HepG2 (cell line): ENCODE measurements at regions of chr15 and their contacts with region 1.

Region 1: DNA sequence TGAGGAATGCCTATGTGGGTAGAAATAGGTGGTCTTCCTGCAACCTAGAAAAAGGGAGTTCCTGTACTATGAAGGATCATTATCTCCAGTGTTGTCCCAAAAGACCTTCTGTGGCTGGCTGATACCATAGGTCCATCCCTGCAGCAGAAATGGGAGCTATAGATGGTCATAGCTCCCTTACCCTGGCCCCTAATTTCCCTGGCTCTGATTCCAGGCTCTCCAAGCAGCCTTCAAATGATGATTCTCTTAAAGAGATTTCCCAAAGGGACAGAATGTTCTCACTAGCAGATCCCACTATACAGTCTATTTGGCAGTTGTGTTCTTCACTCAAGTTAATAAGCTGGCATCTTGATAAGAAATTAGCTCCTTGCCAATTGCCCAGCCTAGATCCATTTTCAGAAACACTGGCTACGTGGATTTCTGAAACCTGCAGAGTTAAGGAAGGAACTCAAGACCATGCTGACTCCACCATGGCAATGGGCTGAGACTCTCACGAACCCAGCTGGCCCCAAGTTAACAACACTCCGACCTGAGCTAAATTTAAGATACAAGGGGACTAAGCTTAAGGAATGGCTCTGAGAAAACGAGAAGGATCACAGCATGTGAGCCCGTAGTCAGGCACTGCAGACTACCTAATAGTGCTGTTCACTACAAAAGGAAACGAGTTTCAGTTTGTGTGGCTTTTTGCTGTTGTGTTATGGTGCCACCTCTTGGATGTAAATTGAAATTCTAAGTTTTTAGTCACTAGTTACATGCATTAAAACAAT is 11.4 kb downstream of the C15orf40 start:
- DNase-seq: peak; percentile 28
- ATAC-seq: peak; percentile 72
- H3K4me3 ChIP-seq: no peak overlapping the region
- H3K27ac ChIP-seq: no peak overlapping the region
- H3K4me1 ChIP-seq: no peaks in the 10 kb centered on the region
- H3K27me3 ChIP-seq: no peaks in the 10 kb centered on the region
- CTCF ChIP-seq: peak; percentile 61
- EP300 ChIP-seq: no peak
- POLR2A ChIP-seq: no peak
- RAD21 ChIP-seq: peak; percentile 47; the same call in 1 of the 2 replicates

Region 2: GRCh38 chr15:82530606-82531379 is 469.3 kb before region 1 on chr15:
- CTCF ChIA-PET with region 1: no interaction called
- POLR2A ChIA-PET with region 1: no interaction called
- in situ Hi-C with region 1: no loop called
- intact Hi-C with region 1: loop called (anchors 2 kb)
- DNase-seq: peak; percentile 67
- ATAC-seq: peak; percentile 69
- H3K4me3 ChIP-seq: peak overlapping the region; percentile 42 to 76 (median 49); a peak in 5 of 6 replicates
- H3K27ac ChIP-seq: no peak overlapping the region
- H3K4me1 ChIP-seq: peaks cover 3% of the 10 kb centered on the region
- H3K27me3 ChIP-seq: no peaks in the 10 kb centered on the region
- CTCF ChIP-seq: peak; percentile 91
- EP300 ChIP-seq: no peak
- POLR2A ChIP-seq: no peak
- RAD21 ChIP-seq: peak; percentile 73

Region 3: GRCh38 chr15:82540055-82540983 is 459.8 kb before region 1 on chr15 and contains the start of gene RPS17:
- CTCF ChIA-PET with region 1: no interaction called
- POLR2A ChIA-PET with region 1: no interaction called
- in situ Hi-C with region 1: no loop called
- intact Hi-C with region 1: loop called (anchors 2 kb)
- DNase-seq: peak; percentile 88
- ATAC-seq: peak; percentile 90
- H3K4me3 ChIP-seq: peak within 1 kb of the TSS; percentile 98 to 100 (median 98)
- H3K27ac ChIP-seq: peak within 1 kb of the TSS; percentile 90
- H3K4me1 ChIP-seq: peaks cover 41% of the 10 kb centered on the region
- H3K27me3 ChIP-seq: peaks cover 0 to 10% of the 10 kb centered on the region in 2 experiments; a peak in 1 of 5 replicates
- CTCF ChIP-seq: peak; percentile 98
- EP300 ChIP-seq: peak; percentile 21 to 44; a peak in 1 of 4 replicates
- POLR2A ChIP-seq: peak; percentile 95 to 99
- RAD21 ChIP-seq: peak; percentile 67
- total RNA-seq, gene RPS17: 2,570 and 3,054 TPM in 2 replicates

Region 4: GRCh38 chr15:82849556-82850512 is 150.3 kb before region 1 on chr15:
- CTCF ChIA-PET with region 1: interaction called, 17 read pairs
- POLR2A ChIA-PET with region 1: no interaction called
- in situ Hi-C with region 1: no loop called
- intact Hi-C with region 1: loop called (anchors 1 kb)
- DNase-seq: peak; percentile 73
- ATAC-seq: peak; percentile 91
- H3K4me3 ChIP-seq: peak overlapping the region in 1 of 3 experiments; percentile 18; a peak in 1 of 6 replicates
- H3K27ac ChIP-seq: no peak overlapping the region
- H3K4me1 ChIP-seq: peaks cover 19% of the 10 kb centered on the region
- H3K27me3 ChIP-seq: no peaks in the 10 kb centered on the region; a peak in 1 of 5 replicates
- CTCF ChIP-seq: peak; percentile 88
- EP300 ChIP-seq: no peak
- POLR2A ChIP-seq: no peak
- RAD21 ChIP-seq: peak; percentile 42; the same call in 1 of the 2 replicates

Region 5: GRCh38 chr15:83061680-83062079 is 61.6 kb after region 1 on chr15:
- CTCF ChIA-PET with region 1: no interaction called
- POLR2A ChIA-PET with region 1: no interaction called
- in situ Hi-C with region 1: no loop called
- intact Hi-C with region 1: no loop called
- DNase-seq: no peak
- ATAC-seq: no peak
- H3K4me3 ChIP-seq: no peak overlapping the region
- H3K27ac ChIP-seq: no peak overlapping the region
- H3K4me1 ChIP-seq: peaks cover 45% of the 10 kb centered on the region
- H3K27me3 ChIP-seq: no peaks in the 10 kb centered on the region
- CTCF ChIP-seq: no peak
- EP300 ChIP-seq: no peak
- POLR2A ChIP-seq: no peak
- RAD21 ChIP-seq: no peak